GM10248 (cell line): ENCODE measurements at regions of chr6 and their contacts with region 1.

Region 1: GRCh38 chr6:6724539-6725467 is 136.3 kb downstream of the LY86 start:
- DNase-seq: peak; percentile 79
- CTCF ChIP-seq: peak; percentile 72

Region 2: GRCh38 chr6:6057424-6058053 is 667.3 kb before region 1 on chr6:
- CTCF ChIA-PET with region 1: no interaction called
- POLR2A ChIA-PET with region 1: no interaction called
- DNase-seq: peak; percentile 56
- CTCF ChIP-seq: peak; percentile 37

Region 3: DNA sequence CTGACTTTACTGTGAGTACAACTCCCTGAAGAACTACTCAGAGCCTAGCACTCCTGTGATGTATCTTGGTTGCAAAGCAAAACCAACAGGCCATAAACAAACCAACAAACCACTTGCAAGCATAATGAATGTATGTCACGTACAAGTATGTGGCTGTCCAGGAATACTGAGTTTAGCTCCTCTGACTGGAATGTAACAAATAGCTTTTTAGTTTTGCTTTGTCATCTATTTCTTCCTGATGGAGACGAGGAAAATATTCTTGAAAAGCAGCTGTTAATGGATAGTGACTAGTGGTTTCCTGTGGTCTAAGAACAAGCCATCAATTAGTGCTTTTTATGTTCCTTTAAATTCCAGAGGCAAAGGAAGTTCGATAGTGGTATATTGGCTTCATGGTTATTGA is 238.2 kb before region 1 on chr6:
- CTCF ChIA-PET with region 1: no interaction called
- POLR2A ChIA-PET with region 1: no interaction called
- DNase-seq: no peak
- CTCF ChIP-seq: no peak

Region 4: GRCh38 chr6:6610031-6610591 is 114.7 kb before region 1 on chr6:
- CTCF ChIA-PET with region 1: no interaction called
- POLR2A ChIA-PET with region 1: no interaction called
- DNase-seq: peak; percentile 71
- CTCF ChIP-seq: no peak

Region 5: GRCh38 chr6:6676910-6677441 is 47.8 kb before region 1 on chr6:
- CTCF ChIA-PET with region 1: interaction called, 10 read pairs
- POLR2A ChIA-PET with region 1: no interaction called
- DNase-seq: peak; percentile 73
- CTCF ChIP-seq: peak; percentile 90

Region 6: DNA sequence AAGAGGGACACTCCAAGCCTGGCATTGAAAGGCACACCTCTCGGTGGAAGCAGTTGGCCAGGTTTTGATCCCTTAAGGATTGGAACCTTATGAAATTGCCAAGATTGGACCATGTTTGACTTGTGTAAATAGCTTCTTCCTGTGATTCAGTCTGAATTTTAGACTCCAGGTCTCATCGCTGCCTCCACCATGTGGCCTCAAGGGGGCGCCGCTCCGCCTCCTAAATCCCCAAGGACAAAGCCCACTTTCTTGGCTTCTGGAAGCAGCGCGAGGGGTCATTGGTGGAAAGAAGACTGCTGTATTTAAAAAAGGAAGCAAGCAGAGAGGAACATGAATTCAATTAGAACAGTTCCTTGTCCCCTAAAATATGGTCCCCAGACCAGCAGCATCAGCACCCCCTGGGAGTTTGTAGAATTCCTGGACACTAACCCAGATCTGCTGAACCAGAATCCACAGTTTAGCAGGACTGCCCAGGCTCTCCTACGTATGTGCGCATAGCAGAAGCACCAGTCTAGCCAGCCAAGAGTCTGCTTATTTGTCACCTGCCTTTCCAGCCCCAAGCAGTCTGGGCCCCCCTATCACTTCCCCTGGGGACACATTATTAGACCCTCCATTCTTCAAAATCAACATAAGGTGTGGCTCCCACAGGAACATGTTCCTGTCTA is 27.8 kb before region 1 on chr6:
- CTCF ChIA-PET with region 1: interaction called, 10 read pairs
- POLR2A ChIA-PET with region 1: no interaction called
- DNase-seq: peak; percentile 62
- CTCF ChIP-seq: peak; percentile 76

Region 7: DNA sequence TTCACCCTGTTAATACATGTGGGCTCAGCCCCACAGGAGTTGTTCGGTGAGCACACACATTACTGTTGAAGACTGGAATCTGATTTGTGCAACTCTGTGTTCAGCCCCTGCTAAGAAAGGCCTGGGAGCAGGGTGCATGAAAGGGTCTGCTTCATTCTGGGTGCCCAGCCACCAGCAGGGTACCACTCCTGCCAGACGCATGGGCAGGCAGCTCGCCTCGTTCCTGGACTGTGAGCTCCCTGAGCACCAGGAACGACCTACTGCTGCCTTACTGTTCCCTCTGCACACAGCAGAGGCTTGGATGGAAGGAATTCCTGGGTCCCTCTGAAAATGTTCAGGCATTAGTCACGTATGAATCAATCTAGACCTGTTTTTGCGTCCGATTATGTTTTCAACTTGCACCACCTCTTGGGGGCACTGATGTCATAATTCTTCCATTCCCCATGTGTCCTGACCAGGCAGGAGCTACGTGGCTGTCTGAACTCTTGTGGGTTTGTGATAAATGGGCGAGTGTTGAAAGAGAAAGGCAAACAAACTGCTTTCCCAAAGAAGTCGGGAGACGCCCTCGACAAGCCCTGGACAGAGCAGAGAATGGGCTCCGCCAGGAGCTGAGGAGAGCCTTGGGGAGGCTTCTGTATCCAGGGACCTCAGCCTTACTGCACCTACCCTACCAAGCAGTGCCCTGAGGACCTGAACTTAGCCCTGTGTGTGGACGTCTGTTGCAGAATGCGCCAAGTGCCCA is 12.4 kb before region 1 on chr6:
- CTCF ChIA-PET with region 1: interaction called, 11 read pairs
- POLR2A ChIA-PET with region 1: no interaction called
- DNase-seq: peak; percentile 34
- CTCF ChIP-seq: no peak

Region 8: GRCh38 chr6:6742535-6742934 is 17.7 kb after region 1 on chr6:
- CTCF ChIA-PET with region 1: interaction called, 12 read pairs
- POLR2A ChIA-PET with region 1: no interaction called
- DNase-seq: no peak
- CTCF ChIP-seq: no peak

Region 9: DNA sequence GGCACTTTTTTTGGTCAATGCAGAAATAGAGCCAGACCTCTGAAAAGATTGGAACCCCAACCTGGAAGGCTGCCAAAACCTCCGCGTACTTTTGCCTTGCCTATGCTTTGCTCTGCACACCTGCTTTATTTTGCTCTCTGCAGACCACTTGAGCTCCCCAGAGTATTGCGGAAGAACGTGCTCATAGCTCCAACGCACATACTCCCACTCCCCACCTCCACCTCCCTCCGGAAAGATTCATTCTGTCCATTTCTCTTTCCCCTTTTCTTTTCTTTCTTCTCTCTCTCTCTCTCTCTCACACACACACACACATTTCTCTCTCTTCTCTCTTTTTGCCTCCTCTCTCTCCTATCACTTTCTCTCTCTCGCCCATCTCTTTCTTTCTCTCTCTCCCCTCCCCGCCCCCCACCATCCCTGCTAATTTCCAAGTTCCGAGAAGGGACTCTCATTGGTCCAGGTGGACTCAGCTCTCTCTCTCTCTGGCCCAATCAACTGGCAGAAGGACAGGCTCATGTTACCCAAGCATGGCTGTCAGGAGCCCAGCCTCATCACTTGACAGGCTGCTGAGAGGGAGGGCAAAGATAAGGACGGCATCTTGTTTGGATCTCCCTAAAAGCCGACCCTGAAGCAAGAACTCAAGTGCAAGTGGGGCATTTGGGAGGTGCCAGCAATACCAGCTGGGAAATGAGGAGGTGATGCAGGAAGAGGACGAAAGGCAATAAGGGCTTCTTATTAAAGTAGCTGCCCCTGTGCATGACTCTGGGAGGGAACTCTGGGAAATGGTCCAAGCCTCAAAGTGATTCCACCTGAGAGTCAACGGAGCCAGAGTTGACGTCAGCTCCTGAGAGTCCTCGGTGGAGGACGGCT is 109.8 kb after region 1 on chr6:
- CTCF ChIA-PET with region 1: no interaction called
- POLR2A ChIA-PET with region 1: no interaction called
- DNase-seq: no peak
- CTCF ChIP-seq: no peak